ENCODE measurements at regions of chr1 and their contacts with region 1.

Region 1: GRCh38 chr1:24759492-24759891 is 14.2 kb downstream of the CLIC4 start:
- DNase-seq: no peak
- H3K4me3 ChIP-seq: no peak overlapping the region
- H3K27ac ChIP-seq: no peak overlapping the region
- H3K27me3 ChIP-seq: no peaks in the 10 kb centered on the region
- CTCF ChIP-seq: no peak

Region 2: DNA sequence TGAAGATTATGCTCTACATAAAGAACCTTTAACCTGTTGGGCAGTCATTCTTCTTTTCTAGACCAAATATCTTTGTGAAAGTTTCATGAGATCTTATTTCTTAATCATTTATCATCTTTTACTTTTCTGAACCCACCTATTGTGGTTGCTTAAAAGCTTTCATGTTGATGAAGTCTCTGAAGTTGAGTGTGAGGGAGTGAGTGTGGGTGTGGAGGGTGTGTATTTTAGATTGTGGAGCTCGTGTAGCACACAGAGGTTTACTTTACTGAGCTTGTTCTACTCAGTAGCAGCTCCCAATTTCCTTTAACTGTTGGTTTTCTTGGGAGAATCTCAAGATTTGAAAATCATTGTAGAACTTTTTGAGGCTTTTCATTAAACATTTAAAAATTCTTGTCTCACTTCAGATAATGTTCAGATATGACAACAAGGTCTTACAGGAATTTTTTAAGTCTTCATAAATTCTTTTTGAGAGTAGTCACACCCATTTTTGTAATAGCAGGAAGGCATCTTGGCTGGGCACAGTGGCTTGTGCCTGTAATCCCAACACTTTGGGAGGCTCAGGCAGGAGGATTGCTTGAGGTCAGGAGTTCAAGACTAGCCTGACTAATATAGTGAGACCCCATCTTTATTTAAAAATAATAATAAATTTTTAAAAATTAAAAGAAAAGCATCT is 99.4 kb before region 1 on chr1:
- intact Hi-C with region 1: no loop called
- DNase-seq: no peak
- H3K4me3 ChIP-seq: no peak overlapping the region
- H3K27ac ChIP-seq: no peak overlapping the region
- H3K27me3 ChIP-seq: no peaks in the 10 kb centered on the region
- CTCF ChIP-seq: no peak

Region 3: GRCh38 chr1:24727501-24728216 is 31.8 kb before region 1 on chr1:
- intact Hi-C with region 1: loop called in 1 of 2 experiments (anchors 2 kb)
- DNase-seq: peak in 1 of 10 donors; percentile 45
- H3K4me3 ChIP-seq: peak overlapping the region in 1 of 59 donors; percentile 9
- H3K27ac ChIP-seq: peak overlapping the region in 53 of 59 donors; percentile 2 to 89 (median 65)
- H3K27me3 ChIP-seq: no peaks in the 10 kb centered on the region
- CTCF ChIP-seq: no peak

Region 4: GRCh38 chr1:24830680-24831272 is 71.3 kb after region 1 on chr1:
- intact Hi-C with region 1: no loop called
- DNase-seq: no peak
- H3K4me3 ChIP-seq: peak overlapping the region in 4 of 59 donors; percentile 4 to 40 (median 27)
- H3K27ac ChIP-seq: peak overlapping the region in 37 of 59 donors; percentile 5 to 75 (median 48)
- H3K27me3 ChIP-seq: no peaks in the 10 kb centered on the region
- CTCF ChIP-seq: peak; percentile 73 to 95 (median 85)

Region 5: DNA sequence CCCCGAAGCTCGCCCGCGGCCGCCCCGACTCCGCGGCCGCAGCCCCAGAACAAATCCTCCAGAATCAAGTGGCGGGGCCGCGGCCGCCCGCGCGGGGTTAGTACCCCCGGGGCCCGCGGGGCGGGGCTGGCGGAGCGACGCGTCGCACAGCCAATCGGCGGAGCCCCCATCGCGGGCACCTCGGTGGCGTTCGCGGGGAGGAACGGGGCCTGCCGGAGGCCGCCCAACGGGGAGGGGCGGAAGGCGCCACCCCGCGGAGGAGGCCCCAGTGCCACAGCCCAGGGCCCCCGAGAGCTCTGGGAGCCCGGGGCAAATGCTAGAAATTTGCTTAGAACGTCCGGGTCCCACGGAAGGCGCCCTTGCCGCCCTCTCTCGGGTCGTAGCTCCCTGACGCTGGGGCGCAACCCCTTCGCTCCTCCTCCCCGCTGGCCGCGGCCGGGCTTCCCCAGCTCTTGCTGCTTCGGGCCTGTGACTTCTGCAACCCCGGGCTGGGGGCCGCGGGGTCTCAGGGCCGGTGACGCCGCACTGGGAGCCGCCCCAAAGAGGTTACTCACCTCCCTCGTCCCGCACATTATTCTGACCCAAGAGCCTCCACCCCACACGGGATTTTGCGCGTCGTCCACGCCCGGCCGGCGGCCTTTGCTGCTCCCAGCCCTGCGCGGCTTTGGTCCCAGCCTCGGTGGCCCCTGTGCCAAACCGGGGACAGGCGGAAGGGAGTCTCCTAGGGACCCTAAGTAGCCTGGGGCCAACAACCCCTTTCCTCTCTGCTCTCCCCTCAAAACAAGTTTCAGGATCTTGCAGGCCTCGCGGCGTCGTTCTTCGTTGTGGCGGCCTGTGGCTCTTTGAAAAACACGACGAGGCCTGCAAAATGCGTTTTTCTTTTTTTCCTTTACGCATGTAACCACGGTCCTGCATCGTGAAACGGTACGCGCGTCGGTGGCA is 171.0 kb after region 1 on chr1 and contains the start of gene RUNX3:
- intact Hi-C with region 1: no loop called
- DNase-seq: no peak
- H3K4me3 ChIP-seq: peak within 1 kb of the TSS in 56 of 59 donors; percentile 4 to 56 (median 34)
- H3K27ac ChIP-seq: peak within 1 kb of the TSS in 13 of 59 donors; percentile 5 to 69 (median 36)
- H3K27me3 ChIP-seq: peaks cover 8 to 98% (median 87%) of the 10 kb centered on the region in 45 donors
- CTCF ChIP-seq: peak in 5 of 56 donors; percentile 8 to 38 (median 24)
- total RNA-seq, gene RUNX3: 0.29 to 3.9 (median 0.96) TPM